Natural killer cell (primary cell): ENCODE measurements at regions of chr1 and their contacts with region 1.

Region 1: DNA sequence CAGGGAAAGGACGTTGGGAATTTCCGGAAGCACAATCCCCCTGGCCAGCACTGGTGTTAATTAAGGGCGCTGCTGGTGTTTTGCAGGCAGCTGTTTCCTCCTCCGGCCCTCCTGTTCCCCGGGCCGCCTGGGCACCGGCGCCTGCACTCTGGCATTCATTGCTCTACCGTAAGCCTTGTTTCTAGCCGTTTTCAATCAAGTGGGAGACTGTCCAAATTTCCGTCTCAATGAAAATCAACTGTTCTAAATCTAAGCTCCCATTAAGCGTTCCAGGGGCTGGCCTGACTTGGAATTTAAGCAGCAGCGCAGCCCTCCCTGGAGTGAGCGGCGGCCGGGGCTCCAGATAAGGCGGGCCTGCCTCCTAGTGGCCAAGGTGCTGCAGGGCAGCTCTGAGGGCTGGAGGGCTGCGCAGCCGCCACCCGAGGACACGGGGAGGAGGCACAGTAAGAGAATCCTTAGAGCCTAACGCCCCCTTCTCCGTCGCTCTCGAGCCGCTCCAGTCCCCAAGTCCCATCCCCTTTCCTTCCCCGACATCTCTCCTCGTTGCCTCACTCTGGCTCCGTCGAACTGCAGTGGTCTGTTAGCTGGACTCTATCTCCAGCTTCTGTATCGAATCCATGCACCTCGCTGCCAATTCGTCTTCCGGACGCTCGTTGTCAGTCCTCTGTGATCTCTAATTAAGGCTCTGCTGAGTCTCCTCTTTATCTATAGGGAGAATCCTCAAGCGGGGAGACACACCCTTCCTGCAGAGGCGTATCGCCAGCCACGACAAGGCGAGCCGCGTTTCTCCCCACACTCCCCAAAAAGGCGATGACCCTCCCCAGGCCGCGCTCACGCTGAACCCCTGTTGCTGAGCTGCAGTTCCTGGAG is 57.8 kb upstream of the LRRC8D start:
- DNase-seq: peak; percentile 84 to 92
- ATAC-seq: peak; percentile 99 to 100 (median 99)
- H3K4me3 ChIP-seq: peak overlapping the region; percentile 34
- H3K4me3 Mint-ChIP-seq: peak overlapping the region; percentile 92
- H3K27ac ChIP-seq: no peak overlapping the region
- H3K27ac Mint-ChIP-seq: peak overlapping the region; percentile 53 to 90
- H3K4me1 ChIP-seq: peaks cover 15% of the 10 kb centered on the region
- H3K4me1 Mint-ChIP-seq: peaks cover 31 to 40% of the 10 kb centered on the region in 2 donors
- H3K27me3 ChIP-seq: no peaks in the 10 kb centered on the region
- H3K27me3 Mint-ChIP-seq: peaks cover 9 to 12% of the 10 kb centered on the region in 2 donors
- CTCF ChIP-seq: peak; percentile 99

Region 2: DNA sequence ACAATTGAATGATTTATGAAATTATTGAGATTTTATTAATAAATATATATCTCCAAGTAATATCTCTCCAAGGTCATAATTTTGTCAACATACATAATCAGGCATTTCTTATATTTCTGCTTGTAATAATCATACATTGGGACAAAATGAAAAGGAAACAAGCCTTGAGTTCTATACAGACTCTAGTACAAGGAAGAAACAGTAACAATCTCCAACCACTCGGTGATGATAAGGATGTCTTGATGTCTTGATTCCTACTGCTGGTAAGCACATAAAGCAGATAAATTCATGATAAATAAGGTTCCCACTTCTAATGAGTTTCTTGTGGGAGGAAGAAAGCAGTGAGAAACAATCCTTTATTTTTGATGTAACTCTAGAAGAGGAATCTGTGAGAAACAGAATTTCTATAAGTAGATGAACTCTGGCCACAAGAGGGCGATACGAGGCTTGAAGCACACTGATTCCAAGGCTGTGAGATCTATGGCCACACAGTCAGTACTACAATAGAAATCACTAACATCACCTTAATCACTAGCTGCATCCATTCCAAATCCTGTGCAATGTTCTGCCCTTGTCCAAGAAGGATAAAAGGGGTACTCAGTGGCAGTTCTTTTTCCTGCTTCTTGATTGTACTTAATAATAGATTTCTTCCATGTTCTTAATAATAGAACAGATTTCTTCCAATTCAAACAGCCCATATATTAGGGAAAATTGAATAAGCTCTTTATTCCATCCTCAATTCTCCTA is 279.8 kb before region 1 on chr1:
- intact Hi-C with region 1: loop called (anchors 1 kb)
- DNase-seq: peak; percentile 48 to 88
- ATAC-seq: peak; percentile 84 to 95 (median 93)
- H3K4me3 ChIP-seq: no peak overlapping the region
- H3K4me3 Mint-ChIP-seq: no peak overlapping the region
- H3K27ac ChIP-seq: no peak overlapping the region
- H3K27ac Mint-ChIP-seq: no peak overlapping the region
- H3K4me1 ChIP-seq: no peaks in the 10 kb centered on the region
- H3K4me1 Mint-ChIP-seq: peaks cover 0 to 3% of the 10 kb centered on the region in 2 donors
- H3K27me3 ChIP-seq: peaks cover 3% of the 10 kb centered on the region
- H3K27me3 Mint-ChIP-seq: peaks cover 4 to 8% of the 10 kb centered on the region in 2 donors
- CTCF ChIP-seq: peak; percentile 88

Region 3: DNA sequence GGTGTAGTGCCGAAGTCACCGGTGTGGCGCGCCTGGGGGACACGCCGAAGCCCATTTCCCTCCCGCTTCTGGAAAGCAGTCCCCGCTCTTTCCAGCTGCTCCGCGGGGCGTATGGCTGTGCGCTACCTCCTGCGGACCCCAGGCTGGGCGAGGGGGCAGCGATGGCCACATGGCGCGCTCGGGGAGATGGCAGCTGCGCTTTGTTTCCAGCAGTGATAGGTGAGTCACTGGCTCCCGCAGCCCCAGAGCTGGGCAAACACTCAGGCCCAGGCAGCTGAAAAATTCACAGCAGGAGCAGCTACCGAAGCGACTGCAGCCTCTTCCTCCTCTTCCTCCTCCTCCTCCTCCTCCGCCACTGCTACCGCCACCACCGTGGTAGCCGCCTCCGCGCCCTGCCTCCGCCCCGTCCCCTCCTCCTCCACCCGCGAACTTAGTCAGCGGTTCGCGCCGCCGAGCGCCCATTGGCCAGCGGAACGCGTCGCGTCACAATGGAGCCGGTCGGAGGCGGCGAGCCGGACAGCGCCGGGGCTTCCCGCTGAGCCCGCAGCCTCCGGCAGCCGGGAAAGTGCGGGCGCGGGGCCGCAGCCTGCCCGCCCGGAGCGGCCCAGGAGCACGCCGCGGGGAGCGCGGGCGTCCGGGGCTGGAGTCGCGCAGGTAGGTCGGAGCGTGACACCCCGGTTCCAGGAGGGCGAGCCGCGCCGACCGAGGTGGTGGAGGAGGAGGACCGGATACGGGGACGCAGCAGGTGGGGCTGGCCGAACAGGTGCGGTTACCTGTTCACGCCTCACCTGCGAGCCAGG is 238.4 kb before region 1 on chr1 and contains the start of gene LRRC8B:
- intact Hi-C with region 1: loop called (anchors 1 kb)
- DNase-seq: peak; percentile 87 to 94
- ATAC-seq: peak; percentile 86 to 96 (median 93)
- H3K4me3 ChIP-seq: peak within 1 kb of the TSS; percentile 86
- H3K4me3 Mint-ChIP-seq: peak within 1 kb of the TSS; percentile 89
- H3K27ac ChIP-seq: peak within 1 kb of the TSS; percentile 93
- H3K27ac Mint-ChIP-seq: peak within 1 kb of the TSS; percentile 80 to 90
- H3K4me1 ChIP-seq: peaks cover 14% of the 10 kb centered on the region
- H3K4me1 Mint-ChIP-seq: peaks cover 8 to 15% of the 10 kb centered on the region in 2 donors
- H3K27me3 ChIP-seq: no peaks in the 10 kb centered on the region
- H3K27me3 Mint-ChIP-seq: no peaks in the 10 kb centered on the region
- CTCF ChIP-seq: no peak
- total RNA-seq, gene LRRC8B: 1.7 to 2.9 (median 2.9) TPM

Region 4: DNA sequence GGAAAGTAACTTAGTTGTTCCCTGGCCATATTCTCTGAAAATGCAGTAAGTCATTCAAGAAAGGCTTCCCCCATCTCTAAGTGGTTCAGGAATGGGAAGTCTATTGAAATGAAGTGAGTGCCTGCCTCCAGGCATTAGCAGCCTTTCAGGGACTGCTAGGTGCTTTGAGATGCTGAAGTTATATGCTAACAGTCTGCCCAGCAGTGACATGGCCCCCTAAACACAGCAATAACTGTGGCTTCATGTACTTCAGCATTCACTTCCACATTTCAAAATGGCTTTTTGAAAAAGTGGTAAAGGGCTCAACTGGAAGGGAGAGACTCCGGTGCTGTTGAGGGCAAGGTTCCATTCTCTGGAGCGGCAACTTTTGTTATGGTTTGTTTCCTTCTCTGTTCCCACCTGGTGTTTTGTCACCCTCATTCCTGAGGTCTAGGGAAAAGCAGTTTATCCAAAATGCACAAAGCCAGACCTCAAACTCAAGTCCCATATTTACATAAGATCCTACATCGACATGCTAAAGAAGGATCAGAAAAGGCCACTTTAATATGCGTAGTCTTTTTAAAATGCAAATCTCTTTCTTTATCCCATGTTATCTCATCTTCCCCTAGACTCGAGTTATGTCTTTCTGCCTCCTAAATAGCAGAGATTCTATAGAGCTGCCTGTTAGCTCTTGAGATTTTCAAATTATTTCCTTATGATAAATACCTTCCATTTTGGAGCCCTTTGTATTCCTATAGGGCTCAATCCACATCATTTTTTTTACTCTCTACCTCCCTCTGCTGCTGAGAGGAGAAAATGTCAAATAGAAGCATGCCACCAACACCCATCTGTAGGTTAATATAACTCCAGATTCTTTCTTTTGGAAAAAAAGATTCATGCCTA is 164.3 kb before region 1 on chr1:
- intact Hi-C with region 1: loop called (anchors 1 kb)
- DNase-seq: peak in 1 of 2 donors; percentile 71
- ATAC-seq: peak; percentile 62 to 82 (median 67)
- H3K4me3 ChIP-seq: no peak overlapping the region
- H3K4me3 Mint-ChIP-seq: no peak overlapping the region
- H3K27ac ChIP-seq: no peak overlapping the region
- H3K27ac Mint-ChIP-seq: peak overlapping the region in 1 of 2 donors; percentile 2
- H3K4me1 ChIP-seq: no peaks in the 10 kb centered on the region
- H3K4me1 Mint-ChIP-seq: peaks cover 7 to 8% of the 10 kb centered on the region in 2 donors
- H3K27me3 ChIP-seq: no peaks in the 10 kb centered on the region
- H3K27me3 Mint-ChIP-seq: no peaks in the 10 kb centered on the region
- CTCF ChIP-seq: peak; percentile 80

Region 5: DNA sequence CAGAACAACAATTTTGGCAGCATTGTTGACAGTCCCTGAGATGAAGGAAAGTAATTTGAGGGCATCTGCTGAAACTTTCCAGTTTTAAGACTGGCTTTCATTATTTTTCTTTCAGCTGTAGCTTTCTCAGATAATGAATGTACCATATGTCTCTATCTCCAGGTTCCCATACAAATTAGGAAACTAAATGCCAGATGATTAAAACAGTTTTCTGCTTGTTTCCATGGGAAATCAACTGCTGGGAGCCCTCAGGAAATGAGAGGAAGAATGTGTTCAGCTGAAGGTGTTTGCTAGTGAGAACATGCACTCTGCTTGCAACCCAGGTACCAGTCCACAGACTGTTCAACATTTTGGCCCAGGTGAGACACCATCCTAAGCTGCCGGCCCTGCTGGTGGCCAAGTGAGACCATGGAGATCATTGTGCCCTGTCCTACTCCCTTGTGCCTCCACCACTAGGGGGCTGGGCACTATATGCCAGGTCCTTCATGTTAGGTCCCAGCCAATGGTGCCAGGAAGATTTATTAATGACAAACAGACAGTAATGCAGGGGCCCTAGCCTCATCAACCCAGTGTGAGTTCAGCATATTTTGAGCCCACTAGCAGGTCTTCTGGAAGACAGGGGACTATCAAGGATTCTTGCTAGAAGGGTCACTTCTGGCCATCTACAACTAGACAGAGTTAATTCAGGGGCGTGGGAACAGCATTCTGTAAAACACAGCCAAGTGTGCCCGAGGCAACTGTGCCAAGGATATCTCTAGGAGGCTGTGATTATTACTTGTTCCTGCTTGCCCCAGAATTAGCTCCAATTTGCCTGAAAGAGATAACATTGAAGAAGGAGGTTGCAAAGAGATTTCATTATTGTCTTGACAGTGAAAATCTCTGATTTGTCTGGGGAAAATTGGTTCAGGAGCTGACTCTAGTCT is 147.1 kb before region 1 on chr1:
- intact Hi-C with region 1: loop called (anchors 5 kb)
- DNase-seq: peak; percentile 23 to 56
- ATAC-seq: peak; percentile 60 to 83 (median 69)
- H3K4me3 ChIP-seq: no peak overlapping the region
- H3K4me3 Mint-ChIP-seq: no peak overlapping the region
- H3K27ac ChIP-seq: no peak overlapping the region
- H3K27ac Mint-ChIP-seq: no peak overlapping the region
- H3K4me1 ChIP-seq: peaks cover 7% of the 10 kb centered on the region
- H3K4me1 Mint-ChIP-seq: peaks cover 11 to 14% of the 10 kb centered on the region in 2 donors
- H3K27me3 ChIP-seq: no peaks in the 10 kb centered on the region
- H3K27me3 Mint-ChIP-seq: peaks cover 0 to 3% of the 10 kb centered on the region in 2 donors
- CTCF ChIP-seq: peak; percentile 35

Region 6: DNA sequence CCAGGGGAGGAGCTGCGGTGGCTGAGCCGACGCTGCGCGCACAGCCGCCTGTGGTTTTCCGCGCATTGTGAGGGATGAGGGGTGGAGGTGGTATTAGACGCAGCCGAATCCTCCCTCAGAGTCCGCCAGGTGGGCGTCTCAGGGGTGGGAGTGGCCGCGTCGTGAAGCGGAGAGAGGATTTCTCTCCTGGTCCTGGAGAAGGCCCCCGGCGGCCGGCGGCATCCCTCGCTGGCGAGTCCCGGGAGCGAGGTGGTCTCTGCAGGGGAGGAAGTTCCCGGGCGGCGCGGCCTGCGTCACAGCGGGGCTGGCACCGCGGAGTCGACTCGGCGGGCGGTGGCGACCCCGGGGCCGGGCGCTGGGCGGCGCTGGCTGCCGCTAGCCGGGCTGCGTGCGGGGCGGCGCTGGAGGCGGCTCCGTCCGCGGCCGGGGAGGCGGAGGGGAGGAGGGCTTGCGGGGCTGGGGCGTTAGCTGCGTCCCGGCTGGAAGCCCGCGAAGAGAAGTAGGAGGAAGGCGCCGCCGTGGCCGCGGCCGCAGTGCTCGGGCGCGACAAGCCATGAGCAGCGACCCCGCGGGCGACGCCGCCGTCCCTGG is 130.3 kb before region 1 on chr1 and contains the start of gene LRRC8C:
- intact Hi-C with region 1: loop called (anchors 1 kb)
- DNase-seq: peak; percentile 89 to 92
- ATAC-seq: peak; percentile 87 to 93 (median 88)
- H3K4me3 ChIP-seq: peak within 1 kb of the TSS; percentile 91
- H3K4me3 Mint-ChIP-seq: peak within 1 kb of the TSS; percentile 95
- H3K27ac ChIP-seq: peak within 1 kb of the TSS; percentile 88
- H3K27ac Mint-ChIP-seq: peak within 1 kb of the TSS; percentile 92 to 99
- H3K4me1 ChIP-seq: peaks cover 19% of the 10 kb centered on the region
- H3K4me1 Mint-ChIP-seq: peaks cover 45 to 56% of the 10 kb centered on the region in 2 donors
- H3K27me3 ChIP-seq: no peaks in the 10 kb centered on the region
- H3K27me3 Mint-ChIP-seq: no peaks in the 10 kb centered on the region
- CTCF ChIP-seq: peak; percentile 48
- total RNA-seq, gene LRRC8C: 7.6 to 19.1 (median 15.1) TPM

Region 7: DNA sequence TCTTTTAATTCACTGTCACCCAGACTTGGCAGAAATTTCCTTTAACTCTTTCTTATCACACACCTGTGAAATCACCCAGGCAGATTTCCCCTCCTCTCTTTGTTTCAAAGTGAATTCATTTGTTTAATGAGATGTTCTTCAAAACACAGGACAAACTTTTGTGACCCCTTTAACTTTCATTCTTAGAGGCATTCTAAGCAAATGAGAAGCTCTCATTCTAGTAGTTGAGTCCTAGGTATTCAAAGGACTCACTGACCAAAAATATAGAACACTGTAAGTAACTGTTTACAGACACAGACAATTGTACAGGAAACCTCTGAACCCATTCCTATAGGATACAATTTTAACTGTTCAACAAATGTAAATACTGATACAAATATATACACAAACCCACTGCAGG is 113.2 kb before region 1 on chr1:
- intact Hi-C with region 1: no loop called
- DNase-seq: no peak
- ATAC-seq: no peak
- H3K4me3 ChIP-seq: no peak overlapping the region
- H3K4me3 Mint-ChIP-seq: no peak overlapping the region
- H3K27ac ChIP-seq: no peak overlapping the region
- H3K27ac Mint-ChIP-seq: peak overlapping the region; percentile 65 to 69
- H3K4me1 ChIP-seq: no peaks in the 10 kb centered on the region
- H3K4me1 Mint-ChIP-seq: peaks cover 39 to 41% of the 10 kb centered on the region in 2 donors
- H3K27me3 ChIP-seq: no peaks in the 10 kb centered on the region
- H3K27me3 Mint-ChIP-seq: no peaks in the 10 kb centered on the region
- CTCF ChIP-seq: no peak

Region 8: GRCh38 chr1:89719502-89720306 is 43.3 kb before region 1 on chr1:
- intact Hi-C with region 1: loop called (anchors 5 kb)
- DNase-seq: peak in 1 of 2 donors; percentile 60
- ATAC-seq: peak; percentile 45 to 70 (median 67)
- H3K4me3 ChIP-seq: no peak overlapping the region
- H3K4me3 Mint-ChIP-seq: peak overlapping the region; percentile 83
- H3K27ac ChIP-seq: peak overlapping the region; percentile 84
- H3K27ac Mint-ChIP-seq: peak overlapping the region; percentile 88 to 95
- H3K4me1 ChIP-seq: peaks cover 26% of the 10 kb centered on the region
- H3K4me1 Mint-ChIP-seq: peaks cover 52 to 56% of the 10 kb centered on the region in 2 donors
- H3K27me3 ChIP-seq: no peaks in the 10 kb centered on the region
- H3K27me3 Mint-ChIP-seq: no peaks in the 10 kb centered on the region
- CTCF ChIP-seq: no peak

Region 9: GRCh38 chr1:89804642-89805237 is 41.7 kb after region 1 on chr1:
- intact Hi-C with region 1: no loop called
- DNase-seq: peak; percentile 70 to 90
- ATAC-seq: peak; percentile 88 to 97 (median 94)
- H3K4me3 ChIP-seq: no peak overlapping the region
- H3K4me3 Mint-ChIP-seq: no peak overlapping the region
- H3K27ac ChIP-seq: no peak overlapping the region
- H3K27ac Mint-ChIP-seq: no peak overlapping the region
- H3K4me1 ChIP-seq: no peaks in the 10 kb centered on the region
- H3K4me1 Mint-ChIP-seq: peaks cover 0 to 2% of the 10 kb centered on the region in 2 donors
- H3K27me3 ChIP-seq: no peaks in the 10 kb centered on the region
- H3K27me3 Mint-ChIP-seq: peaks cover 3 to 6% of the 10 kb centered on the region in 2 donors
- CTCF ChIP-seq: peak; percentile 87